HCT116 (cell line): ENCODE measurements at regions of chr14 and their contacts with region 1.

Region 1: DNA sequence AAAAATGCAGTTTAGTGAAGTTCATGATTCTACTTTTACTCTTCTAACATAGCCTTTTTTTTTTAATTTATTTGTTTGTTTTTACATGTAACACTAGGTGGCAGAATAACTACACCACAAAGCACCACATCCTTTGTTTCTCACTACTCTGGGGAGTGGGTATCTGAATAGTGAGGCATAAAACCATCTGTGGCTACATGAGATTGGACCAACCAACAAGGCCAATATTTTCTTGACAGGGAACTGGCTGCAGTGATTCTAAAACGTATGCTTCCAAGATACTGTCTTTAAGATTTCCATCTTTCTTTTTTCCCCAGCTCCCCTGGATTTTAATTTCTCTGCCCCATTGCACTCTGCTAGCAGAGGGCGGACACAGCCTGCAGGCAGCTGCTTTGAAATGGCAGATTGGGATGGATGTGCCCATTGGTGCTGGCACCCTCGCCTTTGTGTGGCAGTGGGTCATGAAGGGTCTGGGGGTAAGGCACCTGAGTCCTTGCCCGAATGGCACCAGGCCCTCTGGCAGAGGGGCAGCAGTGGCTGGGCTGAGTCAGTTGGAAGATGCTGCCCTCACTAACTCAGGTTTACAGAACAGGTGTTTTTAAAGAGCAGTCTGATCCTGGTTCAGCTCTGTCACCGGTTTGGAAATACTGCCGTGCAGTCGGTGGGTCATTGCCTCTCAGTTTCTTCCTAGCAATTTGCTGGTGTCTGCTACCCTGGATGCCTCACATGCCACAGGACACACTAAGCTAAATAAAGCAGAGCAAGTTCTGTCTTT is 429.1 kb downstream of the RAD51B start:
- DNase-seq: peak; percentile 28
- ATAC-seq: peak; percentile 32
- H3K4me3 ChIP-seq: peak overlapping the region in 1 of 2 experiments; percentile 17; a peak in 1 of 4 replicates
- H3K27ac ChIP-seq: peak overlapping the region; percentile 100
- H3K4me1 ChIP-seq: peaks cover 68 to 85% of the 10 kb centered on the region in 2 experiments
- H3K27me3 ChIP-seq: no peaks in the 10 kb centered on the region
- CTCF ChIP-seq: peak; percentile 42 to 80 (median 71); a peak in 5 of 6 replicates
- POLR2A ChIP-seq: no peak
- RAD21 ChIP-seq: peak; percentile 94

Region 2: GRCh38 chr14:67943947-67944346 is 304.7 kb before region 1 on chr14:
- CTCF ChIA-PET with region 1: interaction called, 17 read pairs
- POLR2A ChIA-PET with region 1: interaction called, 3 read pairs
- RAD21 ChIA-PET with region 1: no interaction called
- intact Hi-C with region 1: loop called (anchors 5 kb)
- DNase-seq: peak; percentile 71
- ATAC-seq: peak; percentile 82
- H3K4me3 ChIP-seq: no peak overlapping the region
- H3K27ac ChIP-seq: peak overlapping the region; percentile 88; the same call in 1 of the 2 replicates
- H3K4me1 ChIP-seq: peaks cover 21 to 42% of the 10 kb centered on the region in 2 experiments
- H3K27me3 ChIP-seq: no peaks in the 10 kb centered on the region
- CTCF ChIP-seq: peak; percentile 56 to 83 (median 74); a peak in 5 of 6 replicates
- POLR2A ChIP-seq: no peak
- RAD21 ChIP-seq: peak; percentile 89

Region 3: DNA sequence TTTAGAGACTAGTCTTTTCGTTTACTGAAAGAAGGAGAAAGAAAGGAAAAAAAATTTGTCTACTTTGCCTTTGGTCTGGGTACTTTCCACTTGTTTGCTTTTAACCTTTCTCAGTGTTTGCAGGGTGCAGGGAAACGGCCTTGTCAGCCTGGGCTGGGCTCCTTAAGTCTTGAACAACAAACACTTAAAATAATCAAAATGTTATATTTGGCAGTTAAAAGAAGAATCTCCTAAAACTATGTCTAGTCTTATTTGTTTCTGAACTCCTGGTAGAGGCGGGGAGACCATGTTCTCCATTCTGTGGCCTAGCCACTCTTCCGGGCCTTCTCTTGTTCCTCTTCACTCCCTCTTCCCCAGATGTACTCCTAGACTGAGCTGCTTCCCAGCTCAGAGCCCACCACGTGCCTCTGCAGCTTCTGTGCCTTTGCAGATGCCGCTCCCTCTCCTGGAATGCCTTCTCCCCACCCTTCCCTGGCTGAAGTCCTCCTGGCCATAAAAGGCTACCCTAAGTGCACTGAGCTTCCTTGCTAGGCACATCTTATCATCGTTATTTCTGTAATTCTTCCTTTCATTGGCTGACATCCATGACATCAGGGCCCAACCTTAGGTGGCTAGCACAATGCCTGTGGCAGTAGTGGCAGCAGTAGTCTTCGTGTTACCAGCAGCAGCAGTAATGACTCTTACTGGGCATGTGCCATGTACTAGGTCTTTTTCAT is 111.3 kb after region 1 on chr14:
- CTCF ChIA-PET with region 1: interaction called, 4 read pairs
- POLR2A ChIA-PET with region 1: no interaction called
- RAD21 ChIA-PET with region 1: no interaction called
- intact Hi-C with region 1: loop called (anchors 10 kb)
- DNase-seq: peak; percentile 37
- ATAC-seq: peak; percentile 55
- H3K4me3 ChIP-seq: no peak overlapping the region
- H3K27ac ChIP-seq: peak overlapping the region; percentile 50
- H3K4me1 ChIP-seq: peaks cover 52% of the 10 kb centered on the region in 2 experiments
- H3K27me3 ChIP-seq: no peaks in the 10 kb centered on the region
- CTCF ChIP-seq: no peak
- POLR2A ChIP-seq: peak; percentile 23
- RAD21 ChIP-seq: no peak

Region 4: DNA sequence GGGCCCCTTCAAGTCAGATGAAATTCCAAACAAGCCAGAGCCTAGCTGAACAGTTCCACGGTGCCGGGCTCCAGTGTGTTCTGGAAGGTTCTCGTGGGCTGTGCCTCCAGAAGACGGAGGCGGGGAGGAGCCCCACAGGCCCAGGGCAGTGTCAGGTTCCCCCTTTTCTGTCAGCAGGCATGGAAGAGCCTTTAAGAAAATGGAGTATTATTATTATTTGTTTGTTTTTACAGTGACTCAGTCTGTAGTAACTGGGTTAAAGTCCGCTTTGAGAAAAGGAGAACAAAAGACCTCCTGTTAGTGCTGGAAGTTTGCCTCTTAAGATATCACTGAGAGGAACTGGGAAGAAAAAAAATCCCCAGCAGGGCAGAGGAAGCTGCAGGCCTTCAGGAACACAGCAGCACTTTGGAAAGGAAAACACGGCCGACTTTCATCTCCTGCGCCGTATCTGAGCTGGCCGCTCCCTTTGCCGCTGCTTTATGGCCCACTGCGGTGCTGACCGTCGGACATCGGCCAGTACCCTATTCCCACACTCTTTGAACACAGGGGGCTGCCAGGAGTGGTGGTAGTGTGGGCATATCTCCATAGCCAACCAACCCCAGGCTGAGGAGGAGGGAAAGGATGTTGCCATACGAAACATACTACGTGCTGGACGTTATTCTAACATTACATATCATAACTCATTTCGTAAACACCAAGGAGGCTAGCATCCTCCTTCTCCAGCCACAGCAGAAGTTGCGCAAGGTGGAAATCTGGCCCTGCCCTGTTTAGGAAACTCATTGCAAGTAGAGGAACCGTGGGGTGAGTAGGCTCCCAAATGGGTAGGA is 350.2 kb after region 1 on chr14:
- CTCF ChIA-PET with region 1: interaction called, 3 read pairs
- POLR2A ChIA-PET with region 1: no interaction called
- RAD21 ChIA-PET with region 1: no interaction called
- intact Hi-C with region 1: loop called (anchors 5 kb)
- DNase-seq: peak; percentile 97
- ATAC-seq: peak; percentile 87
- H3K4me3 ChIP-seq: peak overlapping the region; percentile 7 to 39; a peak in 3 of 4 replicates
- H3K27ac ChIP-seq: peak overlapping the region; percentile 94
- H3K4me1 ChIP-seq: peaks cover 45 to 72% of the 10 kb centered on the region in 2 experiments
- H3K27me3 ChIP-seq: no peaks in the 10 kb centered on the region
- CTCF ChIP-seq: no peak
- POLR2A ChIP-seq: no peak
- RAD21 ChIP-seq: peak; percentile 50; the same call in 1 of the 2 replicates

Region 5: DNA sequence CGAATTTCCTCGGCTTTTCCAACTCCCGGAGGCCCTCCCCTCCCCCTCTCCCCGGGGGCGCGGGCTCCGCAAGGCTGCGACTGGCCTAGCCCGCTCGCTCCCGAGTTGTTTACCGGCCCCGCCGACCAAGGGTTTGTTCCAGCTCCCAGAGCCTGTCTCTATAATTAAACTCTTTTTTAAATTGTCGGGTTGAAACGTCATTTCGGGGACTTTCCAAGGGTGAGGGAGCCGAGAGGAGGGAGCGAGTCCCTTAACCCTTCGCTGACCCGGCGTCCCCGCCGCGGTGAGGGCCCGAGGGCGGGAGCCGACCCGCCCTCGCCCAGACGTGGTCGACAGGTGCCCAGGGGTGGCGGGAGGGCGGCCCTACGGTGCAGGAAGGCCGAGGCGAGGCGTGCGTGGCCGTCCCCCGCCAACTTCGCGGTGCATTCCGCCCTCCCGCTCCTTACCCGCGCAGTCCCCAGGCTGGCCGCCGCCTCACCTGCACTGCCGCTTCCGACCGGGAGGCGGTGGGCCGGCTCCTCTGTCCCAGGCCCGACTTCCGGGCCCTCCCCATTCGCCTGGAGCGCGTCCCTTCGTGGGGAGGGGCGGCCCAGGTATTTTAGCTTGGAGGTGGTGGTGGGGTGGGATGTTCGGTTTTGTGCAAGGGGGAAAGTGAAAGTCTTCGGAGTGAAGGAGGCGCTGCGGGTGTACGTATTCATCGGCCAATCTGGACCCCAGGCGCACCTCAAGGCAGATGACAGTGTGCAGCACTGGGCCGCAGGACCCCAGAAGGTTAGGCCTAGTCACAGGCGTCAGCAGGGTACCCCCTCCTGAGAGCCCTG is 547.1 kb after region 1 on chr14:
- CTCF ChIA-PET with region 1: no interaction called
- POLR2A ChIA-PET with region 1: interaction called, 37 read pairs
- RAD21 ChIA-PET with region 1: no interaction called
- intact Hi-C with region 1: no loop called
- DNase-seq: no peak
- ATAC-seq: peak; percentile 68
- H3K4me3 ChIP-seq: peak overlapping the region; percentile 83 to 89
- H3K27ac ChIP-seq: peak overlapping the region; percentile 99
- H3K4me1 ChIP-seq: peaks cover 27 to 57% of the 10 kb centered on the region in 2 experiments
- H3K27me3 ChIP-seq: no peaks in the 10 kb centered on the region
- CTCF ChIP-seq: peak in 2 of 3 experiments; percentile 58 to 71; a peak in 4 of 6 replicates
- POLR2A ChIP-seq: no peak
- RAD21 ChIP-seq: no peak